IMR-90 (cell line): ENCODE measurements at regions of chr22 and their contacts with region 1.

Region 1: GRCh38 chr22:32474635-32475467 is at the start of gene FBXO7:
- DNase-seq: peak; percentile 90
- ATAC-seq: peak; percentile 88
- H3K4me3 ChIP-seq: peak within 1 kb of the TSS; percentile 67
- H3K27ac ChIP-seq: peak within 1 kb of the TSS; percentile 90
- H3K4me1 ChIP-seq: peaks cover 13% of the 10 kb centered on the region
- H3K27me3 ChIP-seq: no peaks in the 10 kb centered on the region
- CTCF ChIP-seq: peak; percentile 59
- POLR2A ChIP-seq: peak; percentile 86
- RAD21 ChIP-seq: no peak
- total RNA-seq, gene FBXO7: 61.4 and 71.5 TPM in 2 replicates

Region 2: GRCh38 chr22:31970490-31971444 is 504.1 kb before region 1 on chr22:
- CTCF ChIA-PET with region 1: interaction called, 6 read pairs
- POLR2A ChIA-PET with region 1: no interaction called
- dilution Hi-C with region 1: no loop called
- in situ Hi-C with region 1: loop called (anchors 10 kb)
- intact Hi-C with region 1: no loop called
- DNase-seq: peak; percentile 51
- ATAC-seq: peak; percentile 99
- H3K4me3 ChIP-seq: peak overlapping the region; percentile 47
- H3K27ac ChIP-seq: no peak overlapping the region
- H3K4me1 ChIP-seq: no peaks in the 10 kb centered on the region
- H3K27me3 ChIP-seq: no peaks in the 10 kb centered on the region; the same call in 1 of the 2 replicates
- CTCF ChIP-seq: peak; percentile 91
- POLR2A ChIP-seq: no peak
- RAD21 ChIP-seq: peak; percentile 74

Region 3: DNA sequence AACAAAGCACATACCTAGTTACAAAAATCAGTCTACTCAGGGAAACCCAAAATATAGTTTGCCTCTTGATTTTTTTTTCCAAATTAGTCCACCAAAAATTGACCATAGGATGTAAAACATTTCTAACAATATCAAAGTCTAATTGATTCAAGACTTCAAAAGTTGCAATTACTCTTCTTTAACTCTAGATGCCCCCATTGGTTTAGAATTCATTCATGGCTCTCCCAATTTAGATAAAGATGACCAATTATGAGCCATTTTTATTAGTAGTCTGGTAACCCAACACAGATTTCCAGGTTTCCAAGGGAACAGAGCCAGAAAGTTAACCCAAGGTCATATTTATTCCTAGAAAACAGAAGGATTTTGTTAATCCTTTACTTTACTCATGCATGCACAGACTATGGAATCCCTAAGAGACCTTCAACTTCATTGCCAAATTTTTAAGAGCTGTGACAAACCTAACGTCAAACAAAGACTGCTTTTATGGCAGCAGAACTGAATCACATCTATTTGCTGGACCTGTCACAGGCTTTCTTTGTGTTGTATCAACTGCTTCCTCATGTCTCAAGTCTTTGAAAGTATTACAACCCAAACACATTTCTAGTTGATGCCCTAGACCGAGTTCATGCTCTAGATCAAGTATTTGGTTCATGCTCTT is 371.1 kb before region 1 on chr22:
- CTCF ChIA-PET with region 1: no interaction called
- POLR2A ChIA-PET with region 1: no interaction called
- dilution Hi-C with region 1: no loop called
- in situ Hi-C with region 1: no loop called
- intact Hi-C with region 1: loop called (anchors 10 kb)
- DNase-seq: peak; percentile 3
- ATAC-seq: no peak
- H3K4me3 ChIP-seq: no peak overlapping the region
- H3K27ac ChIP-seq: no peak overlapping the region
- H3K4me1 ChIP-seq: no peaks in the 10 kb centered on the region
- H3K27me3 ChIP-seq: 0 out of 2 replicates have a peak, but pooled peaks cover 3% of the 10 kb centered on the region
- CTCF ChIP-seq: peak; percentile 37
- POLR2A ChIP-seq: no peak
- RAD21 ChIP-seq: peak; percentile 47

Region 4: GRCh38 chr22:32222991-32223390 is 251.9 kb before region 1 on chr22:
- CTCF ChIA-PET with region 1: no interaction called
- POLR2A ChIA-PET with region 1: no interaction called
- dilution Hi-C with region 1: no loop called
- in situ Hi-C with region 1: no loop called
- intact Hi-C with region 1: no loop called
- DNase-seq: no peak
- ATAC-seq: no peak
- H3K4me3 ChIP-seq: no peak overlapping the region
- H3K27ac ChIP-seq: no peak overlapping the region
- H3K4me1 ChIP-seq: no peaks in the 10 kb centered on the region
- H3K27me3 ChIP-seq: peaks cover 2% of the 10 kb centered on the region; the same call in 1 of the 2 replicates
- CTCF ChIP-seq: no peak
- POLR2A ChIP-seq: no peak
- RAD21 ChIP-seq: no peak

Region 5: DNA sequence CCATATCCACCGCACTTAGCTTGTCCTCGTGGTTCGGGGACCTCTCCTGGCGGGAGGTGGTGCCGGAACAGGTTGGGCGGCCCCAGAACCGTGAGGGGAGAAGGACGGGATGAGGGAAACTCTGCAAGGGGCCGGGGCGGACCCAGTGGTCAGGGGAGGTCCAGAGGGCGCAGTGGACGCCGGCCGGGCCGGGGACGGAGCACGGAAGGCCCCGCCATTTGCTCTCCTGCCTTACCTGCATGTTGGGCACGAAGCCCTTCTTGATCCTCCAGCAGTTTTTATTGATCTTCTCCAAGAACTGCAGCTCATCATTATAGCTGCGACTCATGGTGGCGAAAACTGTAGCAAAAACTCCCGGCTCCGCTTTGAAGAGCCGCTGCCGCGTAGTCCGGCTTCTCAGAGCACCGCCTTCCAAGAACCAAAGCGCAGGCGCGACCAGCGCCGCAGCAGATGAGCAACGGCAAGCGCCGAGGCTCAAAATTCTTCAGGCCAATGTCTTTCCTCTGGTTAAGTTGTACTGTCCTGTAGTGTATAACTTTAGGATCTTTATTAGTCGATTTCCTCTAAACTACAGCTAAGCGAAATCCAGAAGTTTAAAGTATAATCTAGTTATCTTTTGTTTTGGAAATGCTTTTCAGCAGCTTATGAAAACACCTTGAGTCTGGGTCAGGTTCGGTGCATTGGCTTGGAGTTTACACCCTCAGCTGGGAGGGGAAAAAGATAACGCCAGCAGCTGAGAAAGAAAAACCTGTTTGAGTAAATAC is 62.8 kb before region 1 on chr22 and contains the start of gene RTCB:
- CTCF ChIA-PET with region 1: interaction called, 5 read pairs
- POLR2A ChIA-PET with region 1: no interaction called
- dilution Hi-C with region 1: no loop called
- in situ Hi-C with region 1: loop called (anchors 5 kb)
- intact Hi-C with region 1: loop called (anchors 1 kb)
- DNase-seq: peak; percentile 93
- ATAC-seq: peak; percentile 94
- H3K4me3 ChIP-seq: peak within 1 kb of the TSS; percentile 78
- H3K27ac ChIP-seq: peak within 1 kb of the TSS; percentile 57
- H3K4me1 ChIP-seq: peaks cover 2% of the 10 kb centered on the region; the same call in 1 of the 2 replicates
- H3K27me3 ChIP-seq: no peaks in the 10 kb centered on the region; the same call in none of the 2 replicates
- CTCF ChIP-seq: no peak
- POLR2A ChIP-seq: peak; percentile 48; the same call in 1 of the 2 replicates
- RAD21 ChIP-seq: no peak
- total RNA-seq, gene RTCB: 213 and 240 TPM in 2 replicates

Region 6: DNA sequence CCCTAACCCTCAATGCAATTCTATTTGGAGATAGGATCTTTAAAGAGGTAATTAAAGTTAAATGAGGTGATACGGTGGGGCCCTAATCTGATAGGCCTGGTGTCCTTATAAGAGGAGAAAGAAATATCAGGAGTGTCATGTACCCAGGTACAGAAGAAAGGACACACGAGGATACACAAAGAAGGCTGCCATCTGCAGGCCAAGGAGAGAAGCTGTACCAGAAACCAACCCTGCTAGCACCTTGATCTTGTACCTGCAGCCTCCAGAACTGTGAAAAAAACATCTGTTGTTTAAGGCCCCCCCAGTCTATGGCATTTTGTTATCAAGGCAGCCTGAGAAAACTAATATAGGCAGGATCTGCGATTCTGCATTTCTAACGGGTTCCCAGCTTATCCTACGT is 44.0 kb after region 1 on chr22:
- CTCF ChIA-PET with region 1: no interaction called
- POLR2A ChIA-PET with region 1: no interaction called
- dilution Hi-C with region 1: no loop called
- in situ Hi-C with region 1: no loop called
- intact Hi-C with region 1: no loop called
- DNase-seq: no peak
- ATAC-seq: no peak
- H3K4me3 ChIP-seq: no peak overlapping the region
- H3K27ac ChIP-seq: no peak overlapping the region
- H3K4me1 ChIP-seq: no peaks in the 10 kb centered on the region
- H3K27me3 ChIP-seq: peaks cover 3% of the 10 kb centered on the region
- CTCF ChIP-seq: no peak
- POLR2A ChIP-seq: no peak
- RAD21 ChIP-seq: no peak

Region 7: DNA sequence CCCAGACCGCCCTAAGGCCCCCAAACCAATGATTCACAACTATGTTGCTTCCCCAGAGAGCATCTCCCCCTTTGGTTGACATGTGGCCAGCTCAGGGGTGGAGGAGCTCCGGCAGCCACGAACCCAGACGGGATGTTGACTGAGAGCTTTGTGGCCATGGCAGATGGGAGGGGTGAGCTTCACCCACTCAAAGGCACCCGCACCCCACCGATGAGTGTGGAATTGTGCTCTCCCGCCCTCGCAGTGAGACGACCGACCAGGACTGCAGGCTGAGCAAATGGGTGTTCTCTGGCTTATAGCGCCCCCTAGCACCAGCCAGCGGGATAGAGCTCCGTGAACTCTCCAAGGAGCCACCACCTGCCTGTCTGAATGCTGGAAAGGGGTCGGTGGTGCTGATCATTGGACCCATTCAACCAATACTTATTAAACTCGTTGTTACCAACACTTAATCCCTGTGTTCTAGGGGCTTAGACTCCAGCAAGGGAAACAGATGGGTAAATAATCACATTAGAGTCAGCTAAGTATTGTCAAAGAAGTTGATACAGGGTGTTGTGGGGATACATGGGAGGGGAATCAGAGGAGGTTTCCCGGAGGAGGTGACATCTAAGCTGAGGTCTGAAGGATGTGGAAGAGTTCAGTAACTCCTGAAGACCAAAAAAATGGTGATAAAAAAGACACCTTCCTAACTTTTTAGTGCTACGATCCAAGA is 322.2 kb after region 1 on chr22:
- CTCF ChIA-PET with region 1: interaction called, 3 read pairs
- POLR2A ChIA-PET with region 1: no interaction called
- dilution Hi-C with region 1: no loop called
- in situ Hi-C with region 1: no loop called
- intact Hi-C with region 1: loop called (anchors 2 kb)
- DNase-seq: peak; percentile 83
- ATAC-seq: peak; percentile 55
- H3K4me3 ChIP-seq: no peak overlapping the region
- H3K27ac ChIP-seq: peak overlapping the region; percentile 9
- H3K4me1 ChIP-seq: peaks cover 10% of the 10 kb centered on the region
- H3K27me3 ChIP-seq: no peaks in the 10 kb centered on the region
- CTCF ChIP-seq: peak; percentile 95
- POLR2A ChIP-seq: 0 out of 2 replicates have a peak, but pooled peaks have one; percentile 52
- RAD21 ChIP-seq: peak; percentile 98

Region 8: GRCh38 chr22:33000342-33001280 is 525.8 kb after region 1 on chr22:
- CTCF ChIA-PET with region 1: no interaction called
- POLR2A ChIA-PET with region 1: no interaction called
- dilution Hi-C with region 1: no loop called
- in situ Hi-C with region 1: no loop called
- intact Hi-C with region 1: loop called (anchors 1 kb)
- DNase-seq: peak; percentile 32
- ATAC-seq: peak; percentile 99
- H3K4me3 ChIP-seq: no peak overlapping the region
- H3K27ac ChIP-seq: no peak overlapping the region
- H3K4me1 ChIP-seq: no peaks in the 10 kb centered on the region
- H3K27me3 ChIP-seq: peaks cover 20% of the 10 kb centered on the region
- CTCF ChIP-seq: peak; percentile 89
- POLR2A ChIP-seq: no peak
- RAD21 ChIP-seq: peak; percentile 88